Prostate gland (tissue), 2 donors: ENCODE measurements at regions of chr14 and their contacts with region 1.

Region 1: DNA sequence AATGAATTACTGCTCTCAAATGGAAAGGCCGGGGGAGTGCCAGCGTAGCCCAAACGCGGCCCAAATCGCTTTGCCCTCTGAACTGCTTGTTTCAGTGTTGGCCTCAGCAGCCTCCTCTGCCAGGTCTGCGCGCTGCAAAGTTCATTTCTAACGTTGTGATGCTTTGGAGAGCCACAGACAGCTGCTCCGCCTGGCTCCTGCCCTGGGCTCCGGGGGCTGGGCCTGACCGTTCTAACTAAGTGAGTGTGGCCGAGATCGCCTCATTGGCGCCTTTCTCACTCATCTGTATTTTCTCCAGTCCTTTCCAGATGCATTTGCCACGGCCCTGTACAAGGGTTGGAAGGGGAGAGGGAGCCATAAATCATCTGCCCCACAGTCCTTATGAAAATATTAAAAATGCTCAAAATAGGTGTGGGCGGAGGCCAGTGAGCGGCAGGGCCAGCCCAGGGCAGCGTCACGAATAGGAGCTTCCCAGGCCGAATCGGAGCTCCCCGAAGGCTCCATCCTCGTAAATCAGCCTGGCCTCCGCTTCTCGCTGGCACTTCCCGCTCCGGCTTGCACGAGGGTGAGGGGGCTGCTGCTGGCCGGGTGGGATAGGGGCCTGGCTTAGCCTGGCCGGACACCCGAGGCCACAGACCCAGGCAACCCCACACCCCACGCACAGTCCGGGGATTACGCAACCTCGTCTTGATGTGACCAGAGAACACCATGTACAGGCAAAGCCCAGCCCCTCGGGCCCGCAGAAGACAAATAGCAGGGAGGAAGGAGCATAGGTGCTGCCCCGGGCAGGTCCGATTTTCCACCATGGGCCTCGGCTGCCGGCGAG is 196.6 kb upstream of the DIO3 start:
- DNase-seq: no peak
- H3K4me3 ChIP-seq: no peak overlapping the region
- H3K27ac ChIP-seq: peak overlapping the region; percentile 40 to 72
- H3K4me1 ChIP-seq: no peaks in the 10 kb centered on the region
- H3K27me3 ChIP-seq: no peaks in the 10 kb centered on the region
- CTCF ChIP-seq: no peak
- POLR2A ChIP-seq: no peak

Region 2: DNA sequence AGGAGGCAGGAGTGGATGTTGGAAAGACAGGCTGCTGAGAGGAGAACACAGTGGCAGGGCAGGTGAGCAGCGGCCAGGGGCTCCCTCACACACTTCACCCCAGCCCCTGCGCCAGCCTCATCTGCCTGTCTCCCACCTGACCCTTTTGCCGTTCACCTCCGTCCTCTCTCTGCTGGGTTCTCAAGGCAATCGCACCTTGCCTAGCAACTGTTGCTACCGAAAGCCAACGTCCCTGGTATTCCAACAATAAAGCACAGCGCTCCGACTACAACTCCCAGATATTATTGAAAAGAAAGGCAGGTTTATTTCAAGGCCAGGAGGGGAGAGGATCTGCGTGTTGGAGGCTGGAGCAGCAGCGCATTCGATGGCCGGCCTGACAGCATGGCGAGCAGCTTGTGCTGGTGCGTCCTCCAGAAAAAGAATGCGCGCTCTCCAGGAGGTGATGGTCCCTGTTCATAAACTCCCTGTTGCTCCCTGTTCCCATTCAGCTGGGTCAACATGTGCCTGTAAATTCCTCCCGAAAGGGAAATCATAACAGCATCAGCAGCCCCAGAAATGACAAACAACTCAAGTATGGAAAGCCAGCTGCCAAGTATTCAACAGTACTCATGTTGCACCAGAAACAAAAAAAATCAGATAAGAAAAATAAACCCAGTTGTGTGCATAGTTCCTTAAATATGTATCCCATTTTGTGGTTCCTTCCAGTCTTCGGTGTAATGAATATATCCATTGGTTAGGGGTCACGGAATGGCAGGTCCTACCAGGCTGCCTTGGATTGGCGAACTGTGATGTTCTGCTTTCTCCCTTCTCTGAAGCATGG is 43.6 kb after region 1 on chr14:
- intact Hi-C with region 1: loop called (anchors 5 kb)
- DNase-seq: no peak
- H3K4me3 ChIP-seq: no peak overlapping the region
- H3K27ac ChIP-seq: peak overlapping the region; percentile 52
- H3K4me1 ChIP-seq: no peaks in the 10 kb centered on the region
- H3K27me3 ChIP-seq: no peaks in the 10 kb centered on the region
- CTCF ChIP-seq: no peak
- POLR2A ChIP-seq: no peak

Region 3: GRCh38 chr14:101458526-101459391 is 94.0 kb after region 1 on chr14:
- intact Hi-C with region 1: loop called (anchors 5 kb)
- DNase-seq: no peak
- H3K4me3 ChIP-seq: peak overlapping the region; percentile 4 to 15
- H3K27ac ChIP-seq: no peak overlapping the region
- H3K4me1 ChIP-seq: no peaks in the 10 kb centered on the region
- H3K27me3 ChIP-seq: peaks cover 24% of the 10 kb centered on the region
- CTCF ChIP-seq: no peak
- POLR2A ChIP-seq: no peak